Sciatic nerve (tissue), 2 donors: ENCODE measurements at regions of chr19 and their contacts with region 1.

Region 1: GRCh38 chr19:12847159-12848139 is 9.1 kb downstream of the MAST1 start:
- DNase-seq: peak; percentile 92
- ATAC-seq: peak; percentile 97

Region 2: GRCh38 chr19:12757544-12758274 is 89.7 kb before region 1 on chr19:
- intact Hi-C with region 1: loop called (anchors 5 kb)
- DNase-seq: peak; percentile 74
- ATAC-seq: peak; percentile 67